Activated B cell treated with CpG ODN at 0.5 μM for 24 hours (primary cell): ENCODE measurements at regions of chr10 and their contacts with region 1.

Region 1: GRCh38 chr10:88565072-88565471 is 18.0 kb downstream of the RNLS start:
- DNase-seq: no peak
- ATAC-seq: peak; percentile 28
- H3K4me3 Mint-ChIP-seq: no peak overlapping the region
- H3K27ac Mint-ChIP-seq: no peak overlapping the region
- H3K4me1 Mint-ChIP-seq: peaks cover 4% of the 10 kb centered on the region
- H3K27me3 Mint-ChIP-seq: no peaks in the 10 kb centered on the region
- CTCF ChIP-seq: no peak

Region 2: DNA sequence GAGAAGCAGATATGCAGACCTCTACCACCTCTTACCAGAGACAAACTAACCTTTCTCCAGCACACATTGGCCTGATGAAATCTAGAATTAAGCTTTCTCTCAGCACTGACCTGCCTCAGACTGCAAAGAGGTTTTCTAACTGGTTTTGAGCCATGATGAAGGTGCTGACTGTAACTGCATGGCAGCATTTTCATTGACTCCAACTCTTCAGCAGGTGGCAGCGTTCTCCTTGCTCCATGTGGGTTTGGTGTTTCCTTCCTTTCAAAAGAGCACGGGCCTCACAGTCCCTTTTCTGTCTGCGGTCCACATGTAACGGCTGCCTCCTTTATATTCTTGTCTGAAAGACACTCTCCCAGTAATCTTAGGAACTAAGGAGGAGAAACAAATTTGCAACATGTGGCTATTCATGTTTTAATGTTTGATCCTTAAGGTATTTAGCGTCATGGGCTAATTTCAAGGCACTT is 714.3 kb before region 1 on chr10:
- CTCF ChIA-PET with region 1: interaction called, 4 read pairs
- POLR2A ChIA-PET with region 1: interaction called, 11 read pairs
- intact Hi-C with region 1: no loop called
- DNase-seq: no peak
- ATAC-seq: peak; percentile 77
- H3K4me3 Mint-ChIP-seq: no peak overlapping the region
- H3K27ac Mint-ChIP-seq: no peak overlapping the region
- H3K4me1 Mint-ChIP-seq: peaks cover 5% of the 10 kb centered on the region
- H3K27me3 Mint-ChIP-seq: no peaks in the 10 kb centered on the region
- CTCF ChIP-seq: no peak

Region 3: DNA sequence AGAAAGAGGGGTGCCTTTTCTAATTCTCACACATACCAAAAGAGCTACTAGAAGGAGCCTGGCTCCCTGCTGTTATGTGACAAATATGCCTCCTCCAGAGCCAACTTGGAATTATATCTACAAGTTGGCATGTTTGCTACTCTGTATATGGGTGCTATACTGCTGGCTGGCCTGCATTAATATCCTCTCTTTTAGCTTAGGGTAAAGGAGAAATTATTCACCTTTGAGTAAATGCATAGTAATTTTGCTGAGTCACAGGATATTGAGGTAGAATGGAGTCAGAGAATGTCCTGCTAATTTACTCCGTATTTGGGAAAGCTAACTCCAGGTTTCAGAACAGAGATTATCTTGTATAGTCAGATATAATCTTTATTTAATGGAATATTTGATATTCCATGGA is 170.6 kb after region 1 on chr10:
- CTCF ChIA-PET with region 1: no interaction called
- POLR2A ChIA-PET with region 1: no interaction called
- intact Hi-C with region 1: no loop called
- DNase-seq: no peak
- ATAC-seq: no peak
- H3K4me3 Mint-ChIP-seq: no peak overlapping the region
- H3K27ac Mint-ChIP-seq: no peak overlapping the region
- H3K4me1 Mint-ChIP-seq: peaks cover 9% of the 10 kb centered on the region
- H3K27me3 Mint-ChIP-seq: peaks cover 14% of the 10 kb centered on the region
- CTCF ChIP-seq: no peak

Region 4: DNA sequence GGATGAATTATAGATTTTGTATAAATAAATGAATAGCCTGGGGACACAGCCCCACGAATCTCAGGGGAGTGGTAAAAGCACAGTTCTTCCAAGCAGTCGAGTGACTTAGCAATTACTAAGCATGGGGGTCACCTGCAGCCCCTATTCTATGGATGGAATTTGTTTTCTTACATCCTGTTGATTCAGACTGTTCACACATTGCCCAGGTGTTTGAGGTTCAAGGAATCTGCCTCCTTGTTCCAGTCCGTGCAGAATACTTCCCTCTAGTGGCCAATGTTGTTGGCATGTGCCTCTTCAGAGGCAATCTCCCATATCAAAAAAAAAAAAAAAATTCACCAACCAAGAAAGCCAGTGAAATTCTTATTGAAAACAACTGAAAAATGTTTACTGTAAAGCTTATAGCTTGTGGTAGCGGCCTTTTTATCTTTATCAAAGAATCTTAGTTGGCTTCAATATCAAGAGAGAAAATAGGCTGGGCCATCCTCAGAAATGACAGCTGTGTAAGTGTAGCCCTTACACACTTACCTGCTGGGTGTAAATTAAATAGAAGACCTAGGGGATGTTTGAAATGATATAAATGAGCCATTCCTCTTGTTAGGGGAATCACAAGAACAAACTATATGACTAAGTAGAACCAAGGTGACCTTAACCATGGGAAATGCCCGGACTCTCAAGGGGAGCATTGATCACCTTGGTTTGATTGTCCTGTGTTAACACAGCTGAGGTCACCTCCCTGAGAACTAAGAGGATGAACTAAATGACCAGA is 245.3 kb after region 1 on chr10:
- CTCF ChIA-PET with region 1: interaction called, 6 read pairs
- POLR2A ChIA-PET with region 1: no interaction called
- intact Hi-C with region 1: loop called (anchors 1 kb)
- DNase-seq: no peak
- ATAC-seq: peak; percentile 50
- H3K4me3 Mint-ChIP-seq: no peak overlapping the region
- H3K27ac Mint-ChIP-seq: no peak overlapping the region
- H3K4me1 Mint-ChIP-seq: peaks cover 5% of the 10 kb centered on the region
- H3K27me3 Mint-ChIP-seq: no peaks in the 10 kb centered on the region
- CTCF ChIP-seq: no peak